A549 (cell line): ENCODE measurements at regions of chr1 and their contacts with region 1.

Region 1: DNA sequence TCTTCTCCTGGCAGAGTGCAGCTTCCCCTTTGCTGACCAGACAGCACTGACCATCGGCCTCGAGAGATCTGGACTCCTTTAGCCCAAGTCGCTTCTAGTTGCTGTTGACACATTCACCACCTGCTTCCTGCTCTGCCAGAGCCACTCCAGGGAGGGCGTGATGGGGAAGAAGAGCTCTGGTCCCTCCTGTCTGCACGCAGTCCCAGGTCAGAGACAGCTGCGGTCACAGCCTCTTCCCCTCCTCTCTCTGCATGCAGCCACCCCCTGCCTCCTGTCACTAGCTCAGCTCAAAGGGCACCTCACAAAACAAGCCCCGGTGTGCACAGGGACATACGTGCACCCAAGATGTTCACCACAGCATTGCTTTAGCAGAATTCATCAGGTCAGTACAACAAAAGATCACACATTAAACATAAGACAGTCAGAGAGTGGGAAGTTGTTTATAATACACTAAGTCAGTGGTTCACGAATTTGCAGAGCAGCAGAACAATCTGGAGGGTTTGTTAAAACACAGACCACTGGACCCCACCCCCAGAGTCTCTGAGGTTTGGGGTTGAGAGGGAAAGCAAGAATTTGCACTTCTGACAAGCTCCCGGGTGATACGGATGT is 132.9 kb downstream of the SYF2 start:
- DNase-seq: no peak
- ATAC-seq: peak in 1 of 2 experiments; percentile 17; a peak in 2 of 6 replicates
- H3K4me3 ChIP-seq: no peak overlapping the region
- H3K27ac ChIP-seq: no peak overlapping the region
- H3K4me1 ChIP-seq: no peaks in the 10 kb centered on the region
- CTCF ChIP-seq: no peak
- EP300 ChIP-seq: no peak
- POLR2A ChIP-seq: no peak
- RAD21 ChIP-seq: no peak

Region 2: GRCh38 chr1:24930204-24931145 is 169.0 kb before region 1 on chr1 and contains the start of gene RUNX3:
- CTCF ChIA-PET with region 1: interaction called, 48 read pairs
- POLR2A ChIA-PET with region 1: no interaction called
- DNase-seq: peak; percentile 71 to 85
- ATAC-seq: peak; percentile 82 to 88
- H3K4me3 ChIP-seq: peak within 1 kb of the TSS; percentile 52
- H3K27ac ChIP-seq: peak within 1 kb of the TSS; percentile 53 to 88
- H3K4me1 ChIP-seq: peaks cover 3% of the 10 kb centered on the region; the same call in 1 of the 3 replicates
- CTCF ChIP-seq: no peak
- EP300 ChIP-seq: no peak
- POLR2A ChIP-seq: no peak
- RAD21 ChIP-seq: no peak
- polyA plus RNA-seq, gene RUNX3: 1.4 and 2.6 TPM in 2 replicates

Region 3: GRCh38 chr1:25080294-25081209 is 18.9 kb before region 1 on chr1:
- CTCF ChIA-PET with region 1: interaction called, 10 read pairs
- POLR2A ChIA-PET with region 1: no interaction called
- DNase-seq: peak in 1 of 2 experiments; percentile 14
- ATAC-seq: no peak
- H3K4me3 ChIP-seq: no peak overlapping the region
- H3K27ac ChIP-seq: no peak overlapping the region
- H3K4me1 ChIP-seq: no peaks in the 10 kb centered on the region
- CTCF ChIP-seq: no peak
- EP300 ChIP-seq: no peak
- POLR2A ChIP-seq: no peak
- RAD21 ChIP-seq: no peak

Region 4: GRCh38 chr1:25088946-25089345 is 10.5 kb before region 1 on chr1:
- CTCF ChIA-PET with region 1: interaction called, 16 read pairs
- POLR2A ChIA-PET with region 1: no interaction called
- DNase-seq: no peak
- ATAC-seq: no peak
- H3K4me3 ChIP-seq: no peak overlapping the region
- H3K27ac ChIP-seq: no peak overlapping the region
- H3K4me1 ChIP-seq: peaks cover 5% of the 10 kb centered on the region; the same call in 1 of the 3 replicates
- CTCF ChIP-seq: no peak
- EP300 ChIP-seq: no peak
- POLR2A ChIP-seq: no peak
- RAD21 ChIP-seq: no peak

Region 5: DNA sequence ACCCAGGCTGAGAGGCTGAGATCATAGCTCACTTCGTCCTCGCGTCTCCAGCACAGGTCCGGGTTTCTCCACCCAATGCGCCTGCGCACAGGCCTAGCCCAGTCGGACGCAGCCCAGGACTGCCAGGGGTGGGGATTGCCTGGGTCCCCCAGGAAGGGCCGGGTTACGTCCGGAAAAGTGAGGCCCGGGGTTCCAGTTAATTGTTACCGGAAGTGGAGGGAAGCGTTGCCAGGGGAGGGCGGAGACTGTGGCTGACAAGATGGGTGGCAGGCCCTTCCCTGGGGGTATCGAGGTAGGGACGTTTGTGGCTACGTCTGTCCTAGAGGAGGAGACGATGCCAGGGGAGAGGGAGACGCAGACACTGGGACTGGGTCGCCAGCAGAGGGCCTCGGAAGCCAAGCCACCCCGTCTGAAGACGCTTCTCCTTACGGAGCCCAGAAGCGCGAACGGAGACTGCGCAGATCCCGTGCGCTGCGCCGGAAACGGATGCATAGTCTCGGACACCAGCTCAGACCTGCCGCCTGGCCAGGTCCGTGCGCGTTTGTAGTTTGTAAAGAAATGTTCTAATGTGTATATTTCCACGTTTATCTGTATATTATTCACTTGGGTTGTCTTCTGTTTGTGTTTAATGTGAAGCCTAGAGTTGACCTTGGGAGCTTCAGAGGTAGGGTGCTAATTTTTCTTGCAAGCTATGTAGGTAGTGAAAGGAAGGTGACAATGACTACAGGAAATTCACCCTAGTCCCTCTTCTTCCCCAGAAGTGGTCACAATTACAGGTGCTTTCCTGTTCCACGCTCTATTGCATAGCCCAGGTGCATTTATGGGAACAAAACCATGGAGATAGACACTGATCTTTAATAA is 140.5 kb after region 1 on chr1:
- CTCF ChIA-PET with region 1: no interaction called
- POLR2A ChIA-PET with region 1: no interaction called
- DNase-seq: peak; percentile 68 to 91
- ATAC-seq: peak; percentile 93 to 96
- H3K4me3 ChIP-seq: peak overlapping the region; percentile 40
- H3K27ac ChIP-seq: peak overlapping the region; percentile 72 to 87
- H3K4me1 ChIP-seq: peaks cover 10% of the 10 kb centered on the region; the same call in 2 of the 3 replicates
- CTCF ChIP-seq: peak; percentile 25; the same call in 1 of the 3 replicates
- EP300 ChIP-seq: no peak
- POLR2A ChIP-seq: peak; percentile 27; the same call in 1 of the 2 replicates
- RAD21 ChIP-seq: peak; percentile 28 to 35; a peak in 3 of 5 replicates